AG04449 (cell line): ENCODE measurements at regions of chr11 and their contacts with region 1.

Region 1: GRCh38 chr11:123478352-123478987 is 48.4 kb downstream of the GRAMD1B start:
- DNase-seq: peak; percentile 41
- H3K4me3 ChIP-seq: no peak overlapping the region
- CTCF ChIP-seq: peak; percentile 53

Region 2: DNA sequence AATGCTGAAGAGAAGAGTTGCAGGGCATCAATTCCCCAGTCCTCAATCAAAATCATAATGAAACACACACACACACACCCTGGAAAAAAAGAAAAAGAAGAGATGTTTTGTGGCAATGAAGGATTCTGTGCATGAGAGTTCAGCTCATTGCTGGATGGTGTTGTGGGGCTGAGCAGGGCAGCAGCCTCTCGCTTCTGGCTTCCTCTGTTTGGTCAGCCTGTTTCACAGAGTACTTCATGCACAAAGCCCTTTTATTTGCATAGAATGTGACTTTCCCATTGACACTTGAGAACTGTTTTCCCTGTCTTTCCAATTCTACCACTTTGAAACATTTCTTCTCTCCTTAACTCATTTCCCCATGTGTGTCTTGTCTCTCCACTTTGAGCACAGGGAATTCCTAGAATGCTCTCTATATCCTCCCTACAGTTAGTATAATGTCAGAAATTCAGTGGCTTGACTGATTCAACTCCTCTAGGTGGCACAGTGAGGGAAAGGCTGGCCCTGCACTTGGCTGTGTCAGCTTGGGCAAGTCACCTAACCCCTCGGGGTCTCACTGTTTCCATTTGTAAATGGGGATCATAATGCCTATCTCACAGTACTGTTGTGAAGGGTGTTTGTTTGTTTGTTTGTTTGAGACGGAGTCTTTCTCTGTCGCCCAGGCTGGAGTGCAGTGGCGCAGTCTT is 471.5 kb before region 1 on chr11:
- CTCF ChIA-PET with region 1: no interaction called
- POLR2A ChIA-PET with region 1: no interaction called
- DNase-seq: no peak
- H3K4me3 ChIP-seq: no peak overlapping the region
- CTCF ChIP-seq: no peak

Region 3: GRCh38 chr11:123301696-123302400 is 176.6 kb before region 1 on chr11:
- CTCF ChIA-PET with region 1: interaction called, 58 read pairs
- POLR2A ChIA-PET with region 1: no interaction called
- DNase-seq: no peak
- H3K4me3 ChIP-seq: peak overlapping the region; percentile 47
- CTCF ChIP-seq: peak; percentile 79

Region 4: GRCh38 chr11:123308077-123308476 is 170.4 kb before region 1 on chr11:
- CTCF ChIA-PET with region 1: interaction called, 16 read pairs
- POLR2A ChIA-PET with region 1: no interaction called
- DNase-seq: peak; percentile 47
- H3K4me3 ChIP-seq: no peak overlapping the region; the same call in 1 of the 2 replicates
- CTCF ChIP-seq: no peak

Region 5: GRCh38 chr11:123419731-123420452 is 58.6 kb before region 1 on chr11:
- CTCF ChIA-PET with region 1: interaction called, 12 read pairs
- POLR2A ChIA-PET with region 1: no interaction called
- DNase-seq: no peak
- H3K4me3 ChIP-seq: no peak overlapping the region
- CTCF ChIP-seq: no peak

Region 6: DNA sequence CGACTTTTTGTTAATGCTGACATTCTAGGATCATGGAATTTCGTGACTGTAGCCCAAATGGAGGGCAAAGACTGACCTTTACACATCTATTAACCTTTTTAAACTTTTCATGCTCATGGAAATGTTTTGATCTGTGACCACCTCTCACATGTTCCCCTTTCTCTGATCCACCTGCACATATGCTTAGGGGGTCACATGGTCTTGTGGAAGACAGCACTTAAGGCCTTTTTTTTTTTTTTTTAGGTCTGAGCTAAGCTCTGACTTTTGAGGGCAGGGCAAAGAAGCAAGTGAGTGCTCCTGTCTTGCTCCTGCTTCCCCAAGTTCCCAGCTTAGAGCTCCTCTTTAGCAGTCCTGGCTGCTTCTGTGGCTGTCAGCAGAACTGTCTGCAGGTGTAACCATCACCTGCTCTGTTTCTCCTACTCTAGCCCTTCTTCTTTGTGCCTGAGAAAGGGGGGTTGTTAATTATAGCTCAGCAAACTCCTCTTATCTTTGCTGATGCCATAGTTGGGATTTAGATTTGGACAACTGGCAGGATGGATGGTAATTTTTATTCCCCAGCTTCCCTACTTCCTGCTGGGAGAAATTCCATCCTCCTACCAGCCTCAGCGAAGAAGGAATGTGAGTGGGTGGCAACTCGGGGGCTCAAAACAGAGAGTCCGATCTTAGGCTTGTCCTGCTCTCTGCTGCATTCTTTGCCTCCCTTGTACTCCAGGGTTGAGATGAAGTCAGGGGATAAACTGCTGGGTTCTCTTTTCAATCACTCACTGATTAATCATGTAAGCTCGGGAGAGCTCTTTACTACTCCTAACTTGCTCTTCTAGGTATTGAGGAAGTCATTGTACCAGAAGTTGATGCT is 16.0 kb after region 1 on chr11:
- CTCF ChIA-PET with region 1: interaction called, 45 read pairs
- POLR2A ChIA-PET with region 1: no interaction called
- DNase-seq: no peak
- H3K4me3 ChIP-seq: no peak overlapping the region
- CTCF ChIP-seq: no peak

Region 7: DNA sequence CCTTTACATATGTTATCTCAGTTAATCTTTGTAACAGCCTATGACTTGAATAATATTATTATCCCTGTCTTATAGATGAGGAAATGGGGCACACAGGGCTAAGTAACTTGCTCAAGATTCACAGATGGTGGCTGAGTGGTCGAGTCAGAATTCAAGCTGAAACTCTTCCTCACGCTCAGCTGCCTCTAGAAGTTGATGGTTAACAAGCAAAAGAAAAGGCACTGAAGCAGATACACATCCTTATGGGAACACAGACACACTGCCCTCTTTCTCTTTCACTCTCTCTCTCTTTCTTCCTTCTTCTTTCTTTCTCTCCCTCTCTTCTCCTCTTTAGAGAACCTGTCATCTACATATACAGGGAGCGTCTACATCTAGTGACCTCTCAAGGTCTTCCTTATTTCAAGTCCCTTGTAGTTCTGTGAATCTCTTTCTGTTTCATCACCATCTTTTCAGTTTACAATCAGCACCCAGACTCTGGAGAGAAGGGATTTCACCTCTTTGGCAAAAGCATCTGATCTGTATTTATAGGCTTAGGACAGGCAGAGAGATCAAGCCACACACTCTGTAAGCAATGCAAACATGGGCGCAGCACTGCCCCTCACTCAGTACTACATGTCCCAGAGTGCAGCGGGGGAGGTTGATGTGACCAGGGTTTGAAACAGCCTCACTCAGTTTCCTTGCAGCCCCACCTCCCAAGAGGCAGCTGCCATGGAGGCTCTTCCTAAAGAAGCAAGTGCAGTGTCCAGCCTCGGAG is 27.3 kb after region 1 on chr11:
- CTCF ChIA-PET with region 1: interaction called, 12 read pairs
- POLR2A ChIA-PET with region 1: no interaction called
- DNase-seq: no peak
- H3K4me3 ChIP-seq: no peak overlapping the region
- CTCF ChIP-seq: no peak